CD4-positive, alpha-beta memory T cell (primary cell): ENCODE measurements at regions of chr11 and their contacts with region 1.

Region 1: GRCh38 chr11:10808553-10809372 is at the start of gene EIF4G2:
- DNase-seq: peak; percentile 98 to 99 (median 99)
- H3K4me3 ChIP-seq: peak within 1 kb of the TSS; percentile 77 to 95
- H3K4me3 Mint-ChIP-seq: peak within 1 kb of the TSS; percentile 96 to 99 (median 98)
- H3K27ac ChIP-seq: peak within 1 kb of the TSS; percentile 97
- H3K27ac Mint-ChIP-seq: peak within 1 kb of the TSS; percentile 98 to 100 (median 99)
- H3K4me1 ChIP-seq: peaks cover 44% of the 10 kb centered on the region
- H3K4me1 Mint-ChIP-seq: peaks cover 27 to 62% (median 40%) of the 10 kb centered on the region in 4 donors
- H3K27me3 ChIP-seq: no peaks in the 10 kb centered on the region
- H3K27me3 Mint-ChIP-seq: peaks cover 0 to 3% of the 10 kb centered on the region in 2 donors
- total RNA-seq, gene EIF4G2: 659 to 664 TPM

Region 2: DNA sequence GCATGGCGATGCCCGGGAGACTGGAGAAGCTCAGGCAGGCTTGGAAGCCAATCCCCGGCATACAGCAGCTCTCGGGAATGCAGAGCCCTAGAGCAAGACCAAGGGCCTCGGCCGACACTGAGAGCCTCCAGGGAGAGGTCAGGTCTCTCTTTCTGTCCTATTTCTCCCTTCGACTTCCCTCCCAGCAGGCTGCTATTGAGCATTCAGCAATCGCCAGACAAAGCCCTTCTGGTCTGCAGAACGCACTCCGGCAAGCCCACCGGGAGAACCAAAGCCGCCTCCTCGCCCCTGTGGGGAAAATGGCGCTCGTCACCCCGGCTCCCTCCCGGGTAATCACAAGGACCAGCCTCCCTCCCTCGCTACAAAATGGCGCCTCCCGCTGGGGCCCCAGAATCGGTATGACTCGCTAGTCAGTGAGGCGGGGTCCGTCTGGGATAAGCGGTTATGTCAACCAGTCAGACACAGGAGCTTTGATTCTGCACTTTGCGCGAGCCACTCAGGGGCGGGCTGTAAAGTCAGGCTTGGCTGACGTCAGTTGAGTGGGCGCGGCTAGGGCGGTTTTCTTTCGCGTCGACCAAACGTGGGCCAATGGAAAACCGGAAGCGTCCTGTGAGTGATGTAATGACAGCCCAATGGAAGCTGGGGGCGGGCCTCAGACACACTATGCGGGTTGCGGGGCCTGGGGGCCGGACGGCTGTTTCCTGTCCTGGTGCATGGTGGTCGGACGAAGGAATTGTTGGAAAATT is 1348.3 kb before region 1 on chr11 and contains the start of gene ZNF143:
- CTCF ChIA-PET with region 1: no interaction called
- POLR2A ChIA-PET with region 1: interaction called, 20 read pairs
- intact Hi-C with region 1: loop called (anchors 2 kb)
- DNase-seq: peak; percentile 99 to 100 (median 100)
- H3K4me3 ChIP-seq: peak within 1 kb of the TSS; percentile 88 to 96
- H3K4me3 Mint-ChIP-seq: peak within 1 kb of the TSS; percentile 93 to 98 (median 97)
- H3K27ac ChIP-seq: peak within 1 kb of the TSS; percentile 97
- H3K27ac Mint-ChIP-seq: peak within 1 kb of the TSS; percentile 98 to 100 (median 99)
- H3K4me1 ChIP-seq: peaks cover 33% of the 10 kb centered on the region
- H3K4me1 Mint-ChIP-seq: peaks cover 16 to 43% (median 26%) of the 10 kb centered on the region in 4 donors
- H3K27me3 ChIP-seq: no peaks in the 10 kb centered on the region
- H3K27me3 Mint-ChIP-seq: no peaks in the 10 kb centered on the region
- total RNA-seq, gene ZNF143: 50.5 to 51.1 TPM

Region 3: GRCh38 chr11:10540923-10541560 is 267.7 kb before region 1 on chr11 and contains the start of gene RNF141:
- CTCF ChIA-PET with region 1: interaction called, 3 read pairs
- POLR2A ChIA-PET with region 1: interaction called, 22 read pairs
- intact Hi-C with region 1: loop called (anchors 5 kb)
- DNase-seq: peak; percentile 89 to 94 (median 93)
- H3K4me3 ChIP-seq: peak within 1 kb of the TSS; percentile 50 to 77
- H3K4me3 Mint-ChIP-seq: peak within 1 kb of the TSS; percentile 87 to 95 (median 90)
- H3K27ac ChIP-seq: peak within 1 kb of the TSS; percentile 64
- H3K27ac Mint-ChIP-seq: peak within 1 kb of the TSS; percentile 87 to 95 (median 92)
- H3K4me1 ChIP-seq: peaks cover 9% of the 10 kb centered on the region
- H3K4me1 Mint-ChIP-seq: peaks cover 11 to 24% (median 18%) of the 10 kb centered on the region in 4 donors
- H3K27me3 ChIP-seq: no peaks in the 10 kb centered on the region
- H3K27me3 Mint-ChIP-seq: no peaks in the 10 kb centered on the region
- total RNA-seq, gene RNF141: 15.6 to 16.3 TPM

Region 4: DNA sequence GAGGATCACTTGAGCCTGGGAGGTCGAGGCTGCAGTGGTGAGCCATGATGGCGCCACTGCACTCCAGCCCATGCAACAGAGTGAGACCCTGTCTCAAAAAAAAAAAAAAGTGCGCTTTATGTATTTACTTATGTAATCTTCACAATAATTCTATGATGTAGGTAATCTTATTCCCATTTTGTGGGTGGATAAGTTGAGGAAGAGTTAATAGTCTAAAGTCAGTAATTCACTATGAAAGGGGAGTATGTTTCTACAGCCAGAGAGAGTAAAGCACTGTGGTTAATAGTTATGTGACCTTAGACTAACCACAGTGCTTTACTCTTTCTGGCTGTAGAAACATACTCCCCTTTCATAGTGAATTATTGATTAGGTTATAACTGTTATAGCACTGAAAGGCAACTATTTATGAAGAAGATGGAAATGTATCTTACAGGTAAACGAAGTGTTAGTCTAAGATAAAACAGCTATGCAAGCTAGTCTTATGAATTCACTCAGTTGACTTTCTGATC is 45.8 kb before region 1 on chr11:
- CTCF ChIA-PET with region 1: no interaction called
- POLR2A ChIA-PET with region 1: interaction called, 13 read pairs
- intact Hi-C with region 1: no loop called
- DNase-seq: no peak
- H3K4me3 ChIP-seq: no peak overlapping the region
- H3K4me3 Mint-ChIP-seq: no peak overlapping the region
- H3K27ac ChIP-seq: no peak overlapping the region
- H3K27ac Mint-ChIP-seq: no peak overlapping the region
- H3K4me1 ChIP-seq: no peaks in the 10 kb centered on the region
- H3K4me1 Mint-ChIP-seq: peaks cover 0 to 5% (median 2%) of the 10 kb centered on the region in 4 donors
- H3K27me3 ChIP-seq: no peaks in the 10 kb centered on the region
- H3K27me3 Mint-ChIP-seq: no peaks in the 10 kb centered on the region

Region 5: DNA sequence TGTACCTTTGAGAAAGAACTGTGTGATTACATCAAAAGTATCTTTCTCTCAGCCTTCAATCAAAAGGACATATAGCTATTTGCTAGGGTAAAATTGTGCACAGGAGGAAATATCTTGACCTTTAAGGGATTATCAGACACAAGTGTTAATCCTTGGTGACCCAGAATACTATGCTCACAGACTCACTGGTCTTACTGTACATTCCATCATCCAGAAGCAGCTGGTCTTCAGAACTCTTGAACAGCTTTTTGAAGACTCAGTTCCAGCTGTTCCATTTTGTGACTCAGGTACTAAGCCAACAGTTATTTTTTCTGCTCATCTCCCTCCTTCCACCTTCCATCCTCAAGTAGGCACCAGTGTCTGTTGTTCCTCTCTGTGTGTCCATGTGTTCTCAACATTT is 29.3 kb after region 1 on chr11:
- CTCF ChIA-PET with region 1: interaction called, 5 read pairs
- POLR2A ChIA-PET with region 1: interaction called, 26 read pairs
- intact Hi-C with region 1: no loop called
- DNase-seq: no peak
- H3K4me3 ChIP-seq: no peak overlapping the region
- H3K4me3 Mint-ChIP-seq: no peak overlapping the region
- H3K27ac ChIP-seq: no peak overlapping the region
- H3K27ac Mint-ChIP-seq: no peak overlapping the region
- H3K4me1 ChIP-seq: no peaks in the 10 kb centered on the region
- H3K4me1 Mint-ChIP-seq: peaks cover 0 to 9% (median under 1%) of the 10 kb centered on the region in 4 donors
- H3K27me3 ChIP-seq: no peaks in the 10 kb centered on the region
- H3K27me3 Mint-ChIP-seq: no peaks in the 10 kb centered on the region

Region 6: GRCh38 chr11:10878408-10879214 is 69.8 kb after region 1 on chr11:
- CTCF ChIA-PET with region 1: interaction called, 15 read pairs
- POLR2A ChIA-PET with region 1: interaction called, 27 read pairs
- intact Hi-C with region 1: loop called (anchors 1 kb)
- DNase-seq: peak; percentile 49 to 65 (median 62)
- H3K4me3 ChIP-seq: no peak overlapping the region
- H3K4me3 Mint-ChIP-seq: no peak overlapping the region
- H3K27ac ChIP-seq: no peak overlapping the region
- H3K27ac Mint-ChIP-seq: peak overlapping the region in 4 of 7 donors; percentile 37 to 84 (median 48)
- H3K4me1 ChIP-seq: no peaks in the 10 kb centered on the region
- H3K4me1 Mint-ChIP-seq: peaks cover 6 to 12% (median 8%) of the 10 kb centered on the region in 4 donors
- H3K27me3 ChIP-seq: no peaks in the 10 kb centered on the region
- H3K27me3 Mint-ChIP-seq: no peaks in the 10 kb centered on the region

Region 7: GRCh38 chr11:11057472-11057854 is 248.7 kb after region 1 on chr11:
- CTCF ChIA-PET with region 1: no interaction called
- POLR2A ChIA-PET with region 1: no interaction called
- intact Hi-C with region 1: no loop called
- DNase-seq: no peak
- H3K4me3 ChIP-seq: no peak overlapping the region
- H3K4me3 Mint-ChIP-seq: no peak overlapping the region
- H3K27ac ChIP-seq: no peak overlapping the region
- H3K27ac Mint-ChIP-seq: no peak overlapping the region
- H3K4me1 ChIP-seq: no peaks in the 10 kb centered on the region
- H3K4me1 Mint-ChIP-seq: no peaks in the 10 kb centered on the region
- H3K27me3 ChIP-seq: no peaks in the 10 kb centered on the region
- H3K27me3 Mint-ChIP-seq: peaks cover 2 to 7% of the 10 kb centered on the region in 2 donors

Region 8: DNA sequence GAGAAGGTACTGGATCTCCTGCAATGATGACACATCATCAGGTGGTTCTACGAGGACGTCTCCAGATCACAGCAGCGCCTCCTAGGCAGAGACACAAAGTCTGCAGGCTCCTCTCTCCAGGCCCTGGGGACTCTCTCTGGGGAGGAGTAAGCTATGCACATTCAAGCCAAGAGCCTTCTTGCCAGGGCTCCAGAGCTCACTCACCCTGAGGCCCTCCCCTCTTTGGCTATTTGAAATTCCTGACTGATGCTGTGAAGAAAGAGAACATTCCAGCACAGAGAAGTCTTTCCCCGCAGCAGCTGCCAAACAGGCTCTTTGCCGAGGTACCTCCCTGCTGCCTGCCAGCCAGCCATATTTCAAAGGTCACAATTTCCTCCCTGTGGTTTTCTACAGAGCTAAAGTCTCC is 339.3 kb after region 1 on chr11:
- CTCF ChIA-PET with region 1: interaction called, 3 read pairs
- POLR2A ChIA-PET with region 1: interaction called, 19 read pairs
- intact Hi-C with region 1: loop called (anchors 2 kb)
- DNase-seq: peak in 2 of 5 donors; percentile 24 to 58
- H3K4me3 ChIP-seq: no peak overlapping the region
- H3K4me3 Mint-ChIP-seq: peak overlapping the region in 5 of 8 donors; percentile 37 to 83 (median 44)
- H3K27ac ChIP-seq: no peak overlapping the region
- H3K27ac Mint-ChIP-seq: peak overlapping the region; percentile 31 to 98 (median 95)
- H3K4me1 ChIP-seq: peaks cover 48% of the 10 kb centered on the region
- H3K4me1 Mint-ChIP-seq: peaks cover 40 to 67% (median 47%) of the 10 kb centered on the region in 4 donors
- H3K27me3 ChIP-seq: no peaks in the 10 kb centered on the region
- H3K27me3 Mint-ChIP-seq: no peaks in the 10 kb centered on the region